Heart right ventricle (tissue), 16 donors: ENCODE measurements at regions of chr4 and their contacts with region 1.

Region 1: GRCh38 chr4:15149839-15150476 is 147.7 kb downstream of the CPEB2 start:
- DNase-seq: peak; percentile 78 to 85
- ATAC-seq: peak; percentile 92 to 96 (median 94)
- H3K4me3 ChIP-seq: no peak overlapping the region
- H3K27ac ChIP-seq: peak overlapping the region in 9 of 10 donors; percentile 22 to 65 (median 57)
- H3K4me1 ChIP-seq: peaks cover 6 to 49% (median 28%) of the 10 kb centered on the region in 9 donors
- H3K27me3 ChIP-seq: no peaks in the 10 kb centered on the region
- CTCF ChIP-seq: peak in 4 of 9 donors; percentile 25 to 39 (median 36)

Region 2: GRCh38 chr4:14824189-14824588 is 325.8 kb before region 1 on chr4:
- intact Hi-C with region 1: no loop called
- DNase-seq: no peak
- ATAC-seq: no peak
- H3K4me3 ChIP-seq: no peak overlapping the region
- H3K27ac ChIP-seq: no peak overlapping the region
- H3K4me1 ChIP-seq: no peaks in the 10 kb centered on the region
- H3K27me3 ChIP-seq: no peaks in the 10 kb centered on the region
- CTCF ChIP-seq: no peak

Region 3: GRCh38 chr4:14841801-14842768 is 307.9 kb before region 1 on chr4:
- intact Hi-C with region 1: loop called in 1 of 10 experiments (anchors 10 kb)
- DNase-seq: peak; percentile 28 to 54
- ATAC-seq: peak; percentile 78 to 99 (median 93)
- H3K4me3 ChIP-seq: peak overlapping the region in 1 of 10 donors; percentile 7
- H3K27ac ChIP-seq: peak overlapping the region in 9 of 10 donors; percentile 29 to 81 (median 74)
- H3K4me1 ChIP-seq: peaks cover 0 to 24% (median 19%) of the 10 kb centered on the region in 9 donors
- H3K27me3 ChIP-seq: no peaks in the 10 kb centered on the region
- CTCF ChIP-seq: no peak

Region 4: DNA sequence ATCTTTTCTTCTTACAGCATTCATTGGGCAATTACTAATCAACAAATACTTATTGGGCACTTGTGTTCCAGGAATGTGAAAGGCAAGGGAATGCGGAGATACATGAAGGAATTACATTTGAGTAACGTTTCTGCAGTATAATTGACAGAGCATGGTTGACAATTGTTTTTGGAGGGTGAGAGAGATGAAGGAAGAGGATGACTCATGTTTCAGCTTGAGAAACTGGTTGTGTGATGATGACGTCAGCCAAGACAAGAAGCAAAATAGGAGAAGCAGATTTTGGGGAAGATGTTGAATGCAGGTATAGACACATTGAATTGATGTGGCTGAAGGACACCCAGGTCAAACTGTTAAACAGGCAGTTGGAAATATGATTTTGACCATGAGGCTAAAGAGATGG is 155.7 kb before region 1 on chr4:
- intact Hi-C with region 1: loop called in 1 of 10 experiments (anchors 10 kb)
- DNase-seq: no peak
- ATAC-seq: no peak
- H3K4me3 ChIP-seq: no peak overlapping the region
- H3K27ac ChIP-seq: no peak overlapping the region
- H3K4me1 ChIP-seq: peaks cover 0 to 4% (median 0%) of the 10 kb centered on the region in 9 donors
- H3K27me3 ChIP-seq: no peaks in the 10 kb centered on the region
- CTCF ChIP-seq: no peak

Region 5: DNA sequence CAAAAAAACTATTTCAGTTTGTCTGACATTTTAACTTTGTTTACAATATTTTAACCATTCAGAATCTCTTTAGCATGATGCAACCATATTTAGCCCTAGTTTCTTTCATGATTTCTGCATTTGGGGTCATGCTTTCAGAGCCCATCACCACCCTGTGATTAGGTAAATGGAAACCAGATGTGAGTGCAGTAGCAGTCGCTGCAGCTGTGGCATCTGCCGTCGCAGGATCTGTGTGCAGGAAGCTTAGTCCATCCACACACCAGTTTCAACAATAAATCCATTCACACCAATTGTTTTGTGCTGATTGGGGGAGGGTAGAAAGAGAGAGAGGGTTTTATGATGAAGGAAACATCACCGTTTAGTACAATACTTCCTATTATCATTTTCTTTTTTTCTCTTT is 17.2 kb before region 1 on chr4:
- intact Hi-C with region 1: no loop called
- DNase-seq: no peak
- ATAC-seq: no peak
- H3K4me3 ChIP-seq: no peak overlapping the region
- H3K27ac ChIP-seq: no peak overlapping the region
- H3K4me1 ChIP-seq: no peaks in the 10 kb centered on the region
- H3K27me3 ChIP-seq: no peaks in the 10 kb centered on the region
- CTCF ChIP-seq: no peak

Region 6: GRCh38 chr4:15162465-15163283 is 12.7 kb after region 1 on chr4:
- intact Hi-C with region 1: no loop called
- DNase-seq: no peak
- ATAC-seq: no peak
- H3K4me3 ChIP-seq: no peak overlapping the region
- H3K27ac ChIP-seq: no peak overlapping the region
- H3K4me1 ChIP-seq: no peaks in the 10 kb centered on the region
- H3K27me3 ChIP-seq: no peaks in the 10 kb centered on the region
- CTCF ChIP-seq: peak in 8 of 9 donors; percentile 6 to 63 (median 44)